Right ventricle myocardium inferior (tissue), 1 donor: ENCODE measurements at regions of chr2 and their contacts with region 1.

Region 1: GRCh38 chr2:40363631-40364030 is 88.3 kb downstream of the SLC8A1 start:
- DNase-seq: no peak
- ATAC-seq: no peak

Region 2: DNA sequence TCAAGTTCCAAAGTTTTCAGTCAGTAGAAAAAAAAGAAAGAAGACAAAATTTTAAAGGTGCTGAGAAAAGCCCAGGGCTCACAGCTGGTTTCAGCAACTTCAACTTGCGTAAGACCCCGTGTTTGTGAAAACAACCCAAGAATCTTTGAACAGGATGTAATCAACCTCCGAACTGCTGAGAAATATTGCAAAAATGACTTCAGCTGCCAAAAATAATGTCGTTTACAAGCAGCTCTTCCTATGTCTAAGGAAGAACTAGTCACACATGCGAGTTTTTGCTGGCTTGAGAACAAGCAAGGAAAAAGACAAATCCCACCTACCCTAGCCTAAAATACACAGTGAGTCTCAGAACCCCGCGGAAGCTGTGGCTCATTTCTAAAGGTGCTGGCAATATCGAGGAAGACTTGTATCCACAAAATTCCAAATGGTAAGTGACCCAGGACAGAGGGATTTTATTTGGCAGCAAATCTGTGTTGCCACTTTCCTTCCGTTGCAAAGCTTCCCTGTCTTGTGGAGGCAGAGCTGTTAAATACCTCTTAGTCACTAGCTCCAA is 148.1 kb after region 1 on chr2:
- intact Hi-C with region 1: loop called (anchors 10 kb)
- DNase-seq: no peak
- ATAC-seq: peak; percentile 56